Activated naive CD4-positive, alpha-beta T cell treated with anti-CD3 and anti-CD28 coated beads, Interleukin-2, amount 10 ng/mL, durations not matched to agents 7 days and 5 days (primary cell): ENCODE measurements at regions of chr6 and their contacts with region 1.

Region 1: DNA sequence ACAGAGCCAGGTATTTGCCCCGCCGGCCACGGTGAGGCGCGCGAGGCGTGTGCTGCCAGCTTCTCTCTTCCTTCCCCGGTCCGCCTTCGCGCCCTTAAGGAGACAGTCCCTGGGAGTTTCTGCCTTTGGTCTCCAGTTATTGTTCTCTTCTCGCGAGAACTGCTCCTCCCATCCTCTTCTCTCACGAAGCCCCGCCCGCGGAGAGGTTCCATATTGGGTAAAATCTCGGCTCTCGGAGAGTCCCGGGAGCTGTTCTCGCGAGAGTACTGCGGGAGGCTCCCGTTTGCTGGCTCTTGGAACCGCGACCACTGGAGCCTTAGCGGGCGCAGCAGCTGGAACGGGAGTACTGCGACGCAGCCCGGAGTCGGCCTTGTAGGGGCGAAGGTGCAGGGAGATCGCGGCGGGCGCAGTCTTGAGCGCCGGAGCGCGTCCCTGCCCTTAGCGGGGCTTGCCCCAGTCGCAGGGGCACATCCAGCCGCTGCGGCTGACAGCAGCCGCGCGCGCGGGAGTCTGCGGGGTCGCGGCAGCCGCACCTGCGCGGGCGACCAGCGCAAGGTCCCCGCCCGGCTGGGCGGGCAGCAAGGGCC is at the start of gene MAPK14:
- DNase-seq: peak; percentile 100
- H3K4me3 Mint-ChIP-seq: peak within 1 kb of the TSS; percentile 83
- H3K27ac Mint-ChIP-seq: peak within 1 kb of the TSS; percentile 93
- H3K4me1 Mint-ChIP-seq: peaks cover 40% of the 10 kb centered on the region
- H3K27me3 Mint-ChIP-seq: peaks cover 26% of the 10 kb centered on the region

Region 2: GRCh38 chr6:36094753-36095496 is 67.3 kb after region 1 on chr6:
- CTCF ChIA-PET with region 1: interaction called, 124 read pairs
- DNase-seq: peak; percentile 85
- H3K4me3 Mint-ChIP-seq: no peak overlapping the region
- H3K27ac Mint-ChIP-seq: peak overlapping the region; percentile 11
- H3K4me1 Mint-ChIP-seq: peaks cover 31% of the 10 kb centered on the region
- H3K27me3 Mint-ChIP-seq: no peaks in the 10 kb centered on the region

Region 3: GRCh38 chr6:36123257-36124139 is 95.9 kb after region 1 on chr6:
- CTCF ChIA-PET with region 1: interaction called, 21 read pairs
- DNase-seq: peak; percentile 93
- H3K4me3 Mint-ChIP-seq: peak overlapping the region; percentile 10
- H3K27ac Mint-ChIP-seq: peak overlapping the region; percentile 72
- H3K4me1 Mint-ChIP-seq: peaks cover 84% of the 10 kb centered on the region
- H3K27me3 Mint-ChIP-seq: no peaks in the 10 kb centered on the region

Region 4: DNA sequence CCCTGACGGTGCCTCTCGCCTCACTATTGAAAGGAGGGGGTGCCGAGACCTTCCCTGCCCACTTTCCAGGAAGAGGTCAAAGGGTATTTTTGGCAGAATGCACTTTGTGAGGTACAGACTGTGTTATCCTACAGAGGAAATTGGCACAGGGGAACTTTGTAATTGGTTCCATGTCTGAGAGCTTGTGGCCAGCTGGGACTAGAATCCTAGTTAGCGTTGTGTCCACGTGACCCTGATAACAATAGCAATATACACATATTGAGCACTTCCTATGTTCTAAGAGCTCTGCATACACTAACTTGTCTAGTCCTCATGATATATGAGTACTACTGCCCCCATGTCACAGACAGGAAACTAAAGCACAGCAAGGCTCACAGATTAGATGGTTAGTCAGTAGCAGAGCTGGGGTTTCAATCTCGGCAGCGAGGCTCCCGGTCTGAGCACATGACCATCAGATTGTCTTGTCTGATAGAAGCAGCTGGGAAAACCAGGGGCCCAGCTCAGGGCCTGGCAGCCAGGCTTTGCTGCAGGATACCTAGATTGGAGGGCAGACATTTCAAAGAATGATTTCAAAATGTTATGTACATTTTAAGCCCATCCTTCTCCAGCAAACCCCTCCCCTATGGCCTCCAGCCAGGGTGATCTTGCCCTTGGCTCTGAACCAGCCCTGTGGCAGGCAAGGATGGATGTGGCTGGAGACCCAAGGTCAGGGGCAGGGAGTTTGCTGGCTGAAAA is 104.1 kb after region 1 on chr6:
- CTCF ChIA-PET with region 1: interaction called, 13 read pairs
- DNase-seq: peak; percentile 70
- H3K4me3 Mint-ChIP-seq: peak overlapping the region; percentile 81
- H3K27ac Mint-ChIP-seq: peak overlapping the region; percentile 95
- H3K4me1 Mint-ChIP-seq: peaks cover 47% of the 10 kb centered on the region
- H3K27me3 Mint-ChIP-seq: no peaks in the 10 kb centered on the region